Motor neuron (in vitro differentiated cells): ENCODE measurements at regions of chr2 and their contacts with region 1.

Region 1: GRCh38 chr2:20015472-20016083 is 3.1 kb upstream of the MATN3 start:
- ATAC-seq: peak in 4 of 8 experiments; percentile 12 to 57 (median 40)
- H3K4me3 ChIP-seq: no peak overlapping the region
- H3K27ac ChIP-seq: no peak overlapping the region
- H3K4me1 ChIP-seq: peaks cover 0 to 6% of the 10 kb centered on the region in 2 donors

Region 2: DNA sequence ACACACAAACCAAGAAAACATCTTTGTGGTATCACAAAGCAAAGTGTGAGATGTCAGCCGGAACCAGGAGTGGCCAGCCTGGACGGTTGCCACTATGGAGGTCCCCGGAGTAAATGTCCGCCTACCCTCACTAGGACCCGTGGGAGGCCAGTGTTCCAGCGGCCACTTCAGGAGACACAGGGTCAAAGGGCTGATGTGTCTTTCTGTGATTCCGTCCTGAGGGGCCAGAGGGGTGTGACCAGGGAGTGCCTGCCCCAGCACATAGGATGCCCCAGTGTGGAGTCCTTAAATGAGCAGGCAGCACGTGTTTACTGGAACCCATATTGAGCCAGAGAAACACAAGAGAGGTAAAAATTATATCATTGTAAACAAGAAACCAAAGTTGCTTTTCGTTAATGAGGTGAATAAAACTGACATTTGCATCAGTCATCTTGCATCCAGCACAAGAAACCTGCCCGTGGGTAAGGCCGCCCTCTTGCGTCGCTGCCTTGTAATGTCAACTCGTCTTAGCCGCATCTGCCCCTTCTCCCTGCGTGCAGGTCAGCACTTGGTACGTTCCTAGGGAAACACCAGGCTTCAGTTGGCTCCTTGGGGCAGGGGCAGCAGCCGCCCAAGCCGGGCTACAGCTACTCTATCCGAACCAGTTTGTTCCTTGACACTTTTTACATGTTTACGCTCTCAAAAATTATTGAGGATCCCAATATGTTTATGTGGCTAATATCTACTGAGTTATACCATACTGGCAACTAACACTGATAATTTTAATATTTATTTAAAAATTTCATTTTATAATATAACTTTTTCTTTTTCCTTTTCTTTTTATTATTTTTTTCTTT is 82.5 kb after region 1 on chr2:
- in situ Hi-C with region 1: loop called in 2 of 9 experiments (anchors 10 to 25 kb)
- ATAC-seq: peak; percentile 65 to 94 (median 90)
- H3K4me3 ChIP-seq: no peak overlapping the region
- H3K27ac ChIP-seq: no peak overlapping the region
- H3K4me1 ChIP-seq: no peaks in the 10 kb centered on the region

Region 3: DNA sequence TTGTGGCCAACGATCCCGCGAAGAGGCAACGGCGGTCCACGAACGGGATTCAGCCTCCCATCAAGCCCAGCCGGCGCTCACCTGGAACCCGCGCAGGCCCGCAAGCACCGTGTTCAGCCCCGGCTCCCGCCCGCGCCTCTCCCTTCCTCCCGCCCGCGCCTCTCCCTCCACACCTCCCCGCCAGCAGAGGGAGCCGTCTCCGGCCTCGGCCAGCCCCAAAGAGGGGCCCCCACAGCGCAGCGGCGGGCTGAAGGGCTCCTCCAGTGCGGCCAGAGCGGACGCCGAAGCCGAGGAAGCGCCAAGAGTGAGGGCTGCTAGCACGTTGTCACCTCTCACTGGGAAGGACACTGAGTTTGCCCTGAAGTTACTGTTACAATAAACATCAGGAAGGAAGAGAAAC is 91.2 kb after region 1 on chr2:
- in situ Hi-C with region 1: loop called in 1 of 9 experiments (anchors 25 kb)
- ATAC-seq: no peak
- H3K4me3 ChIP-seq: no peak overlapping the region
- H3K27ac ChIP-seq: no peak overlapping the region
- H3K4me1 ChIP-seq: peaks cover 8 to 21% of the 10 kb centered on the region in 2 donors

Region 4: GRCh38 chr2:20164061-20164733 is 148.6 kb after region 1 on chr2:
- in situ Hi-C with region 1: no loop called
- ATAC-seq: peak in 5 of 8 experiments; percentile 12 to 44 (median 21)
- H3K4me3 ChIP-seq: no peak overlapping the region
- H3K27ac ChIP-seq: no peak overlapping the region
- H3K4me1 ChIP-seq: peaks cover 13 to 18% of the 10 kb centered on the region in 2 donors